Kidney (tissue), 22 donors: ENCODE measurements at regions of chr19 and their contacts with region 1.

Region 1: GRCh38 chr19:47124937-47125668 is 5.5 kb upstream of the SAE1 start:
- DNase-seq: peak in 3 of 5 donors; percentile 41 to 89 (median 83)
- H3K4me3 ChIP-seq: no peak overlapping the region
- H3K27ac ChIP-seq: no peak overlapping the region
- H3K4me1 ChIP-seq: peaks cover 0 to 4% (median 0%) of the 10 kb centered on the region in 3 donors
- H3K27me3 ChIP-seq: no peaks in the 10 kb centered on the region
- CTCF ChIP-seq: peak; percentile 77

Region 2: GRCh38 chr19:46890423-46891170 is 234.5 kb before region 1 on chr19:
- intact Hi-C with region 1: no loop called
- DNase-seq: no peak
- H3K4me3 ChIP-seq: no peak overlapping the region
- H3K27ac ChIP-seq: peak overlapping the region; percentile 23 to 26
- H3K4me1 ChIP-seq: peaks cover 0 to 20% (median 7%) of the 10 kb centered on the region in 3 donors
- H3K27me3 ChIP-seq: no peaks in the 10 kb centered on the region
- CTCF ChIP-seq: no peak

Region 3: GRCh38 chr19:47047763-47048405 is 77.2 kb before region 1 on chr19:
- intact Hi-C with region 1: no loop called
- DNase-seq: peak; percentile 86 to 93 (median 90)
- H3K4me3 ChIP-seq: peak overlapping the region; percentile 75 to 78 (median 78)
- H3K27ac ChIP-seq: peak overlapping the region; percentile 23 to 52
- H3K4me1 ChIP-seq: peaks cover 0 to 2% (median 0%) of the 10 kb centered on the region in 3 donors
- H3K27me3 ChIP-seq: no peaks in the 10 kb centered on the region
- CTCF ChIP-seq: no peak

Region 4: DNA sequence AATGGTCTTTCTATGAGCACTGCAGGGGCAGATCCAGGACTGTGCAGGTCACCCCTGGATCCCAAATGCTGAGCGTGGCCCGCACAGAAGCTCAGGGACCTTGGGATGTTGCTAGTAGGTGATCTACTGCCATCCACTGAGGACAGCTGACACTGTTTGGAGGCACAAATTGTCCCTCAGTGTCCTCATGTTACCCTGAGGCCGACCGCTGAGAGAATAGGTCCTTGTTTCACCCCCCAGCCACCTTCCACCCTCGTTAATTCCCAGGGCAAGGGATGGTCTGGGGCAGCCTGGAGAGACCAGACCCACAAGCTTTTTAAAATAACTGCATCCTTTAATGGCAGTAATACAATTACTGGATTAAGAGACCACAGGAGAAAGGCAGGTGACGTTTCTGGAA is 61.2 kb before region 1 on chr19:
- intact Hi-C with region 1: no loop called
- DNase-seq: no peak
- H3K4me3 ChIP-seq: no peak overlapping the region
- H3K27ac ChIP-seq: no peak overlapping the region
- H3K4me1 ChIP-seq: no peaks in the 10 kb centered on the region
- H3K27me3 ChIP-seq: no peaks in the 10 kb centered on the region
- CTCF ChIP-seq: no peak

Region 5: DNA sequence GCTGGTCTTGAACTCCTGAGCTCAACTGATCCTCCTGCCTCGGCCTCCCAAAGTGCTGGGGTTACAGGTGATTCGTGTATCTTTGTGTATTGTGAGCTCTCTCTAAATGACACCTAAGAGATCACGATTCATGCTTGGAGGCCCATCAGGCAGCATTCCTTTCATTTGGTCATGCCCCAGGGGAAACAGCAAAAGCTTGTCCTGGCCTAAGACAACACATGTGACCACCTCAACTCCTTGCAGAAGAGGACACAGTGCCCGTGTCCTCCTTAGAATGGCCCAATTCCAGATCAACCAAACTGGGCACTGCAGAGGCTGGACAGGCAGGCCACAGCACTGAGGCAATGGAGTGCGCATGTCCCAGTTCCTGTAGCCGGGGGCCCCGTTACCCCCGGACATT is 44.0 kb before region 1 on chr19:
- intact Hi-C with region 1: loop called (anchors 5 kb)
- DNase-seq: no peak
- H3K4me3 ChIP-seq: no peak overlapping the region
- H3K27ac ChIP-seq: no peak overlapping the region
- H3K4me1 ChIP-seq: peaks cover 0 to under 1% (median 0%) of the 10 kb centered on the region in 3 donors
- H3K27me3 ChIP-seq: no peaks in the 10 kb centered on the region
- CTCF ChIP-seq: no peak

Region 6: DNA sequence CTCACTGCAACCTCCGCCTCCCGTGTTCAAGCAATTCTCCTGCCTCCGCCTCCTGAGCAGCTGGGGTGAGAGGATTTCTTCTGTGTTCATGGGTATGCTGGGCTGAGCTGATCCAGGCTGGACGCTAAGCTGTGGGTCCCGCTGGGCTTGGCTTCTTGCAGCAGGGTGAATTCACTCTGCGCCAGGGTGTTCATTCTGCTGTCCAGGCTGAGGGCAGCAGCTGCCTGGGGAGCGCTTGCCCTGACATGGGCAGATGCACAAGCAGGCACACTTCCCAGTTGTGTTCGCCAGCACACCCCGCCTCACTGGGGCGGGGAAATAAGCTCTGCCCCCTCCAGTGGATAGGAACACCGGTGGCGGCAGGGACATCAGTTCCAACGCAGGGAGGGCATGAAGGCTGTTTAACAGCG is 142.3 kb after region 1 on chr19:
- intact Hi-C with region 1: no loop called
- DNase-seq: no peak
- H3K4me3 ChIP-seq: no peak overlapping the region
- H3K27ac ChIP-seq: no peak overlapping the region
- H3K4me1 ChIP-seq: peaks cover 0 to under 1% (median 0%) of the 10 kb centered on the region in 3 donors
- H3K27me3 ChIP-seq: no peaks in the 10 kb centered on the region
- CTCF ChIP-seq: no peak